ENCODE measurements at regions of chr15 and their contacts with region 1.

Region 1: GRCh38 chr15:60804986-60805949 is 326.3 kb upstream of the ICE2 start:
- DNase-seq: no peak
- ATAC-seq: no peak
- H3K4me3 Mint-ChIP-seq: no peak overlapping the region
- H3K27ac Mint-ChIP-seq: no peak overlapping the region
- H3K4me1 Mint-ChIP-seq: peaks cover 69% of the 10 kb centered on the region
- H3K27me3 Mint-ChIP-seq: no peaks in the 10 kb centered on the region
- CTCF ChIP-seq: no peak

Region 2: DNA sequence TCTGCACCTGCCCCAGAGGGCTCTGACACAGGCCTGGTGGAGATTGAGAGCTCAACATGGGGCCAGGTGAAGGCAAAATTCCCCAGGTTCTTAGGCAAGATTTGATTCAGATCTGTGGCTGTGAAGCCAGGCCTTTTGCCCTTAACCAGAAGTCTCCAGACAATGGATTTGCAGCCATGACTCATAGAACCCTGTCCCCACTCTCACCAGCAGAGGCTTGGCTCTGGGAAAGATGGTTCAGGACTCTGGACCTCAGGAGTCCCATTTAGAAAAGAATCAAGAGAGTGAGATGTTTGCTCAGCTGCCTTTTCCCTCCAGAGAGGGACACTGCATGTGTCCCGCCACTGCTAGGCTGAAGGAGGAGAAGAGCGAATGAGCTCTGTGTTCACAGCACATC is 35.0 kb after region 1 on chr15:
- CTCF ChIA-PET with region 1: no interaction called
- POLR2A ChIA-PET with region 1: interaction called, 4 read pairs
- intact Hi-C with region 1: loop called (anchors 5 kb)
- DNase-seq: no peak
- ATAC-seq: no peak
- H3K4me3 Mint-ChIP-seq: peak overlapping the region; percentile 62
- H3K27ac Mint-ChIP-seq: peak overlapping the region; percentile 25
- H3K4me1 Mint-ChIP-seq: peaks cover 77% of the 10 kb centered on the region
- H3K27me3 Mint-ChIP-seq: peaks cover 1% of the 10 kb centered on the region
- CTCF ChIP-seq: no peak

Region 3: DNA sequence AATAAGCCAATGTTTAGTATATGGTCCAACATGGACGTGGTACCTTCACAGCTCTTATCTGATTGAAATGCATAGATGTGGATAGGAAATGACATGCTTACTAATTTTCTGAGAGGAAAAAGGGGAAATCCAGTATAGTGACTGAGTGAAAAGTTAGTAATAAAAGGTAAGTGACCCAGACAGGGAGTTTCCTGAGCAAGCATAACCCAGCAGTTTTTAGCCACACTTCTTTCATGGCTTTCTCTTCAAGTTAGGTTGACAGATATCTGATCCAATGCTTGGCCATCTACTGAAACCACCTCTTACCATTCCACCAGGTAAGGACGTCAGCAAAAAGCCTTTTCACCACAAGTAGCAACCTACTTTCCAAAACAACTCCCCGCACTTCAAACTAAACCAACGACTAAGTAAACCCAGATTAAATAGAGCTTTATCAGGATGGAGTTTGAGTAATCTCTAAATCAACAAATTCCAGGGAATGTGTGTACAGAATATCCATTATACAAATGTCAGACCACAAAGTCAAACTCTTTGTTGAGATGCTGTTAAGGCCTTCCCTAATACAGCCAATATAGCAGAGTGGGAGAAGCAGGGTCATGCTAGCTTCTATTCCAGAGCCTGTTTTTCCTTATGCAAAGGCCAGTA is 94.2 kb after region 1 on chr15:
- CTCF ChIA-PET with region 1: interaction called, 3 read pairs
- POLR2A ChIA-PET with region 1: interaction called, 4 read pairs
- intact Hi-C with region 1: loop called (anchors 5 kb)
- DNase-seq: peak; percentile 49
- ATAC-seq: peak; percentile 83
- H3K4me3 Mint-ChIP-seq: no peak overlapping the region
- H3K27ac Mint-ChIP-seq: peak overlapping the region; percentile 47
- H3K4me1 Mint-ChIP-seq: peaks cover 38% of the 10 kb centered on the region
- H3K27me3 Mint-ChIP-seq: peaks cover 3% of the 10 kb centered on the region
- CTCF ChIP-seq: no peak